Naive thymus-derived CD4-positive, alpha-beta T cell (primary cell): ENCODE measurements at regions of chr12 and their contacts with region 1.

Region 1: GRCh38 chr12:47139000-47139681 is 59.4 kb upstream of the AMIGO2 start:
- DNase-seq: no peak
- ATAC-seq: peak; percentile 27
- H3K4me3 ChIP-seq: no peak overlapping the region
- H3K4me3 Mint-ChIP-seq: no peak overlapping the region
- H3K27ac ChIP-seq: no peak overlapping the region
- H3K27ac Mint-ChIP-seq: peak overlapping the region in 3 of 9 donors; percentile 0 to 13 (median 6)
- H3K4me1 ChIP-seq: no peaks in the 10 kb centered on the region
- H3K4me1 Mint-ChIP-seq: peaks cover 0 to 32% (median 17%) of the 10 kb centered on the region in 7 donors
- H3K27me3 ChIP-seq: no peaks in the 10 kb centered on the region
- H3K27me3 Mint-ChIP-seq: no peaks in the 10 kb centered on the region

Region 2: GRCh38 chr12:47124451-47124850 is 14.7 kb before region 1 on chr12:
- CTCF ChIA-PET with region 1: no interaction called
- POLR2A ChIA-PET with region 1: interaction called, 3 read pairs
- intact Hi-C with region 1: loop called in 1 of 2 experiments (anchors 2 kb)
- DNase-seq: no peak
- ATAC-seq: no peak
- H3K4me3 ChIP-seq: no peak overlapping the region
- H3K4me3 Mint-ChIP-seq: no peak overlapping the region
- H3K27ac ChIP-seq: no peak overlapping the region
- H3K27ac Mint-ChIP-seq: no peak overlapping the region
- H3K4me1 ChIP-seq: no peaks in the 10 kb centered on the region
- H3K4me1 Mint-ChIP-seq: peaks cover 0 to 41% (median 27%) of the 10 kb centered on the region in 7 donors
- H3K27me3 ChIP-seq: no peaks in the 10 kb centered on the region
- H3K27me3 Mint-ChIP-seq: no peaks in the 10 kb centered on the region

Region 3: DNA sequence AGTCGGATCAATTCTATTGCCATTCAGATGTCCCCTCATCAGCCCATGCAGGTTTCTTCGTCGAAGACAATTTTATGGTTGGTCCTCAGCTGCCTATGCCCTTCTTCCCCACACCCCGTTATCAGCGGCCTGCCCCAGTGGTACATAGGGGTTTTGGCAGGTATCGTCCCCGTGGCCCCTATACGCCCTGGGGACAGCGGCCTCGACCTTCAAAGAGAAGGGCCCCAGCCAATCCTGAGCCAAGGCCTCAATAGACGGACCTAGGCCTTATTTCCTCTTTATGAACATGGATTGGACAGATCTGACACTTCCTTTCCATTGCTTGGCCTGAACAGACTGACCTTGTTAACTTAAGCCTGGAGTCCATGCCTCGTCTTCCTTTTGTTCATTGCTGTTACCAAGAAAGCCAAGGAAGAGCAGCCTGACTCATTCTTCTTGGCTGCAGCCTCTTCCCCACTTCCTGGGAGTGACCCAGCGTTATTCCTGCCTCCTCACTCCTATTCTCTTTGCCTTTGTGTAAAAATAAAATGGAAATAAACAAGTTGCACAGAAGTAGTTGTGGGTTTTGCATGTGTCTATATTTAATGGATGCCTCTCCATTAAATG is 97.1 kb after region 1 on chr12:
- CTCF ChIA-PET with region 1: no interaction called
- POLR2A ChIA-PET with region 1: no interaction called
- intact Hi-C with region 1: no loop called
- DNase-seq: no peak
- ATAC-seq: no peak
- H3K4me3 ChIP-seq: no peak overlapping the region
- H3K4me3 Mint-ChIP-seq: peak overlapping the region in 9 of 10 donors; percentile 19 to 75 (median 48)
- H3K27ac ChIP-seq: no peak overlapping the region
- H3K27ac Mint-ChIP-seq: peak overlapping the region; percentile 28 to 82 (median 53)
- H3K4me1 ChIP-seq: peaks cover 16 to 32% of the 10 kb centered on the region in 2 donors
- H3K4me1 Mint-ChIP-seq: peaks cover 37 to 76% (median 61%) of the 10 kb centered on the region in 7 donors
- H3K27me3 ChIP-seq: no peaks in the 10 kb centered on the region
- H3K27me3 Mint-ChIP-seq: no peaks in the 10 kb centered on the region